Activated naive CD4-positive, alpha-beta T cell treated with anti-CD3 and anti-CD28 coated beads for 36 hours (primary cell): ENCODE measurements at regions of chr4 and their contacts with region 1.

Region 1: DNA sequence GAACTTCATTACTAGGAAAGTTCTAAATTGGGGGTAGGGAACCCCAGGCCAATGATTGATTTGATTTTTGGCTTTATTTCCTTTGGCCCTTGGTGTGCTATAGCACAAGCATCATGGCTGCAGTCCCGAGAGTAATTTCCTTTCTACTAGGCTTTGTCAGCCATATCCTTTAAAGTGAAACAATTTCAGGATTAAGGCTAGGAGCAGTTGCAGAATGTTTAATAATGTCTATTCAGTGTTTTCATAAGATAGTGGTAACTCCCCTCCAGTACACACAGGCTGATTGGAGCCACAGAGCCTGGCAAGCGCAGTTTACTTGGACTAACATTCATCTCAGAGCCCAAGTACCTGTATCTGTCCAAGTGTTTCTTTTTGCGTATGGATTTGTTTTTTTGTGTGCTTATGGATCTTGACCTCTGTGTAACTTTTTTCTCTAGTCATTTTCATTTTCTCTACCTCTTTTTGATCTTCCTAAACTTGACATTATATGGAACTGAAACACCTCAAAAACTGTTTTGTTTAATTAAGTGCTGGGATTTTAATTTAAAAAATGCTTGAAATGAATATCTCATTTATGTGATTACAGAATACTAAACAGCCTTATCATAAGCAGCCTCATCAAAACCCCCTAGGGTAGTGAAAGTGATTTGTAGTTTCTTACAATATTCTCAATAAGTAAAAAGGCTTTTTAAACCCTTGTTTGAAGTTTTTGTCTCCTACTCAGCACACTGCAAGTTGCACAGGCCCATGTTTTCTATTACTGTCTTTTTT is 7.5 kb downstream of the STIM2 start:
- DNase-seq: no peak
- H3K4me3 Mint-ChIP-seq: peak overlapping the region; percentile 33
- H3K27ac Mint-ChIP-seq: peak overlapping the region; percentile 19
- H3K4me1 Mint-ChIP-seq: peaks cover 76% of the 10 kb centered on the region
- H3K27me3 Mint-ChIP-seq: no peaks in the 10 kb centered on the region

Region 2: GRCh38 chr4:26885912-26886274 is 17.8 kb after region 1 on chr4:
- CTCF ChIA-PET with region 1: interaction called, 13 read pairs
- intact Hi-C with region 1: loop called (anchors 1 kb)
- DNase-seq: peak; percentile 42
- H3K4me3 Mint-ChIP-seq: peak overlapping the region; percentile 58
- H3K27ac Mint-ChIP-seq: peak overlapping the region; percentile 88
- H3K4me1 Mint-ChIP-seq: peaks cover 67% of the 10 kb centered on the region
- H3K27me3 Mint-ChIP-seq: no peaks in the 10 kb centered on the region